ENCODE measurements at regions of chr1 and their contacts with region 1.

Region 1: GRCh38 chr1:96416111-96416595 is 305.4 kb upstream of the PTBP2 start:
- DNase-seq: peak in 1 of 2 donors; percentile 87
- H3K4me3 ChIP-seq: no peak overlapping the region
- H3K27ac ChIP-seq: peak overlapping the region; percentile 47 to 57
- H3K4me1 ChIP-seq: peaks cover 0 to 5% of the 10 kb centered on the region in 2 donors
- H3K27me3 ChIP-seq: no peaks in the 10 kb centered on the region
- CTCF ChIP-seq: no peak

Region 2: GRCh38 chr1:96482615-96483014 is 66.5 kb after region 1 on chr1:
- intact Hi-C with region 1: no loop called
- DNase-seq: no peak
- H3K4me3 ChIP-seq: no peak overlapping the region
- H3K27ac ChIP-seq: no peak overlapping the region
- H3K4me1 ChIP-seq: no peaks in the 10 kb centered on the region
- H3K27me3 ChIP-seq: no peaks in the 10 kb centered on the region
- CTCF ChIP-seq: no peak

Region 3: GRCh38 chr1:96559707-96560596 is 143.8 kb after region 1 on chr1:
- intact Hi-C with region 1: loop called (anchors 5 kb)
- DNase-seq: peak in 1 of 2 donors; percentile 87
- H3K4me3 ChIP-seq: no peak overlapping the region
- H3K27ac ChIP-seq: peak overlapping the region; percentile 48 to 58
- H3K4me1 ChIP-seq: peaks cover 0 to 7% of the 10 kb centered on the region in 2 donors
- H3K27me3 ChIP-seq: no peaks in the 10 kb centered on the region
- CTCF ChIP-seq: no peak